CD4-positive, alpha-beta memory T cell (primary cell): ENCODE measurements at regions of chr10 and their contacts with region 1.

Region 1: GRCh38 chr10:88990384-88991160 is at the start of gene FAS:
- DNase-seq: peak; percentile 80 to 95 (median 83)
- H3K4me3 ChIP-seq: peak within 1 kb of the TSS; percentile 68 to 81
- H3K4me3 Mint-ChIP-seq: peak within 1 kb of the TSS; percentile 95 to 100 (median 99)
- H3K27ac ChIP-seq: peak within 1 kb of the TSS; percentile 93
- H3K27ac Mint-ChIP-seq: peak within 1 kb of the TSS; percentile 96 to 100 (median 97)
- H3K4me1 ChIP-seq: peaks cover 71% of the 10 kb centered on the region
- H3K4me1 Mint-ChIP-seq: peaks cover 53 to 82% (median 63%) of the 10 kb centered on the region in 4 donors
- H3K27me3 ChIP-seq: no peaks in the 10 kb centered on the region
- H3K27me3 Mint-ChIP-seq: no peaks in the 10 kb centered on the region
- total RNA-seq, gene FAS: 42.4 to 44.2 TPM

Region 2: GRCh38 chr10:88194041-88194887 is 796.3 kb before region 1 on chr10:
- CTCF ChIA-PET with region 1: no interaction called
- POLR2A ChIA-PET with region 1: no interaction called
- intact Hi-C with region 1: loop called (anchors 10 kb)
- DNase-seq: peak; percentile 64 to 80 (median 77)
- H3K4me3 ChIP-seq: peak overlapping the region in 1 of 2 donors; percentile 8
- H3K4me3 Mint-ChIP-seq: peak overlapping the region; percentile 8 to 84 (median 78)
- H3K27ac ChIP-seq: no peak overlapping the region
- H3K27ac Mint-ChIP-seq: peak overlapping the region; percentile 76 to 95 (median 89)
- H3K4me1 ChIP-seq: peaks cover 40% of the 10 kb centered on the region
- H3K4me1 Mint-ChIP-seq: peaks cover 32 to 54% (median 43%) of the 10 kb centered on the region in 4 donors
- H3K27me3 ChIP-seq: no peaks in the 10 kb centered on the region
- H3K27me3 Mint-ChIP-seq: no peaks in the 10 kb centered on the region

Region 3: DNA sequence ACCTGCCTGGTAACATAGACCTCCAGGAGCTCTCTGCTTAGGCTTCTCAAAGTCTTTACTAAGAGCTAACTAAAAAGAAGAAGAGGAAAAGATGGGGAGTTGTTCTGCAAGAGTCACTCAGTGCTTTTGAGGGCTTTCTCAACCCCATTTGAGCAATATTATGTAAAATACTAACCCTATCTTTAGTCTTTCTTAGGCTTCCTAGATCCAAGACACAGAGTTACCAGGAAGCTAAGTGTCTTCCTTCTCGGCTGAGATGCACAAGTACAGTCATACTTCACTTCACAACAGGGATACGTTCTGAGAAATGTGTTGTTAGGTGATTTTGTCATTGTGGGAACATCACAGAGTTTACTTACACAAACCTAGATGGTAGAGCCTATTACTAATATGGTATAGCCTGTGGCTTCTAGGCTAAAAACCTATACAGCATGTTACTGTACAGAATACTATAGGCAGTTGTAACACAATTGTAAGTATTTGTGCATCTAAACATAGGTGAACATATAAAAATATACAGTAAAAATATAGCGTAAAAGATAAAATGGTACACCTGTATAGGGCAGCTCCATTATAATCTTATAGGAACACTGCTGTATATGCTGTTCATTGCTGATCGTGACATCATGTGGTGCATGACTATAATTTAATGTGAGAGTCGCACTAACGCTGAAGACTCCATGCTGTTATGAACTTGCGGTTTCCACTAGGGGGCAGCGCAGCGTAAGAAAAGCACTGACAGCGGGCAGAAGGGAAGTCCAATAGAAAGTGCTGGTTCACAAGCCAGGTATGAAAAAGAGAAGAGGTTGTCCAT is 155.3 kb before region 1 on chr10:
- CTCF ChIA-PET with region 1: interaction called, 19 read pairs
- POLR2A ChIA-PET with region 1: interaction called, 14 read pairs
- intact Hi-C with region 1: loop called (anchors 5 kb)
- DNase-seq: peak; percentile 80 to 86 (median 82)
- H3K4me3 ChIP-seq: no peak overlapping the region
- H3K4me3 Mint-ChIP-seq: no peak overlapping the region
- H3K27ac ChIP-seq: no peak overlapping the region
- H3K27ac Mint-ChIP-seq: peak overlapping the region in 1 of 7 donors; percentile 29
- H3K4me1 ChIP-seq: peaks cover 46% of the 10 kb centered on the region
- H3K4me1 Mint-ChIP-seq: peaks cover 26 to 34% (median 30%) of the 10 kb centered on the region in 4 donors
- H3K27me3 ChIP-seq: no peaks in the 10 kb centered on the region
- H3K27me3 Mint-ChIP-seq: no peaks in the 10 kb centered on the region

Region 4: DNA sequence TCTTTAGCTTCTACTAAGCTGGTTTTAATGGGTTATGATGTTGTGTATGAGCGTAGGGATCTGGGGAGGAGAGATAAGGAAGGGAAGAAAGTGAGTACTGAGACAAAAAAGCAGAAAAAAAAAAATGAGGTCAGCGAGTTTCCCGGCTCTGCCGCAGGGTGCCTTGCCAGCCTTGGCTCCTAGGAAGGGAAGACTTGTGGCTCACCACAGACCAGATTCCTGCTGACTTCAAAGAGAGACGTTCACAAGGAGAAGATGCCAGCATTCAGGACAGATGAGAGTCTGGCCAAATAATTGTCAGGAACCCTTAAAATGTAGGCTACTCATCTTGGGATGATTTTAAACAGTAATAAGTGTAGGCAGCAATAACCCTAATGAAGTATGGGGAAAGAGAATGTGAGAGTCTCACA is 11.4 kb before region 1 on chr10:
- CTCF ChIA-PET with region 1: interaction called, 21 read pairs
- POLR2A ChIA-PET with region 1: interaction called, 54 read pairs
- intact Hi-C with region 1: loop called (anchors 1 kb)
- DNase-seq: no peak
- H3K4me3 ChIP-seq: no peak overlapping the region
- H3K4me3 Mint-ChIP-seq: peak overlapping the region in 3 of 8 donors; percentile 17 to 57 (median 57)
- H3K27ac ChIP-seq: no peak overlapping the region
- H3K27ac Mint-ChIP-seq: peak overlapping the region in 3 of 7 donors; percentile 12 to 60 (median 32)
- H3K4me1 ChIP-seq: peaks cover 27% of the 10 kb centered on the region
- H3K4me1 Mint-ChIP-seq: peaks cover 21 to 40% (median 27%) of the 10 kb centered on the region in 4 donors
- H3K27me3 ChIP-seq: no peaks in the 10 kb centered on the region
- H3K27me3 Mint-ChIP-seq: no peaks in the 10 kb centered on the region

Region 5: GRCh38 chr10:89029785-89030437 is 39.3 kb after region 1 on chr10:
- CTCF ChIA-PET with region 1: interaction called, 19 read pairs
- POLR2A ChIA-PET with region 1: interaction called, 7 read pairs
- intact Hi-C with region 1: no loop called
- DNase-seq: peak; percentile 48 to 63 (median 59)
- H3K4me3 ChIP-seq: no peak overlapping the region
- H3K4me3 Mint-ChIP-seq: peak overlapping the region in 1 of 8 donors; percentile 17
- H3K27ac ChIP-seq: no peak overlapping the region
- H3K27ac Mint-ChIP-seq: peak overlapping the region in 2 of 7 donors; percentile 5 to 42
- H3K4me1 ChIP-seq: peaks cover 4% of the 10 kb centered on the region
- H3K4me1 Mint-ChIP-seq: peaks cover 7 to 14% (median 9%) of the 10 kb centered on the region in 4 donors
- H3K27me3 ChIP-seq: no peaks in the 10 kb centered on the region
- H3K27me3 Mint-ChIP-seq: no peaks in the 10 kb centered on the region

Region 6: GRCh38 chr10:89251409-89252224 is 261.0 kb after region 1 on chr10 and contains the start of gene LIPA:
- CTCF ChIA-PET with region 1: no interaction called
- POLR2A ChIA-PET with region 1: interaction called, 11 read pairs
- intact Hi-C with region 1: no loop called
- DNase-seq: peak; percentile 92 to 98 (median 95)
- H3K4me3 ChIP-seq: peak within 1 kb of the TSS; percentile 58 to 87
- H3K4me3 Mint-ChIP-seq: peak within 1 kb of the TSS; percentile 84 to 96 (median 90)
- H3K27ac ChIP-seq: peak within 1 kb of the TSS; percentile 56
- H3K27ac Mint-ChIP-seq: peak within 1 kb of the TSS; percentile 60 to 88 (median 81)
- H3K4me1 ChIP-seq: peaks cover 21% of the 10 kb centered on the region
- H3K4me1 Mint-ChIP-seq: peaks cover 17 to 29% (median 21%) of the 10 kb centered on the region in 4 donors
- H3K27me3 ChIP-seq: no peaks in the 10 kb centered on the region
- H3K27me3 Mint-ChIP-seq: peaks cover 3 to 5% of the 10 kb centered on the region in 2 donors
- total RNA-seq, gene LIPA: 55.5 to 60.2 TPM